Natural killer cell (primary cell): ENCODE measurements at regions of chr12 and their contacts with region 1.

Region 1: DNA sequence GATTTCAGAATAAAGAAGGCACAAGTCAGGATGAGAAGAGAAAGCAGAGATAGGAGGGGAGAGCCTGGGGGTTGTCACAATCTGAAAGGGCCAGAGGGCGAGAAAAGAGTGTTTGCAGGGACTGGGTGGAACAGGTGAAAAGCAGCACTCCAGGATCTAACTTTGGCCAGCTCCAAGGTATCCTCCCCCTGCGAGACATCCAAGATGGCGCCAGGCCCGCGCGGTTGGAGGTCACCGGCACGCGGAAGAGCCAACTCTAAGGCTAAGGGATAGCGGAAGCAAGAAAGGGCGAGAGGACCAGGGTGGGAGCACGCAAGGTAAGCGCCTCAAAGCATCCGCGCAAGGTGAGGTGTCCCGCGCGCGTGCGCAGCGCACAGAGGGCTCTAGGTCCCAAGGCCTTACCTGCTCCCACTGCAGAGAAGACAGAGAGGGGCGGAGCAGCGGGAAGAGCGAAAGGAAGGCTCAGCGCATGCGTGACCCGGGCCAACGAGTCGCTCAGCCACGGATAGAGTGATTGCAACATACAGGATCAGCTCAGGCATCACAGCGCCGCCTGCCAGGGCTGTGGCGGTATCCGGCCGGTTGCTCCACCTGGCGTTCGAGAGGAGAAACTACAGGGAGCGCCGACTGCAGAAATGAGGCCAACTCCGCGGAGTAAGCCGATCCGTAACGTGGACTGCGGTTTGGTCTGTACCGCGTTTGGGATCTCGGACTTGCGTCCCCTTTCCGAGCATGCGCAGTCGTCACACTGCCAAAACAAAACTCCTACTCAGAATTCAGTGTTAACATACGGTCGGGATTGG is at the start of gene ATP5MC2:
- DNase-seq: peak; percentile 93 to 100
- ATAC-seq: peak; percentile 90 to 98 (median 93)
- H3K4me3 ChIP-seq: peak within 1 kb of the TSS; percentile 94
- H3K4me3 Mint-ChIP-seq: peak within 1 kb of the TSS; percentile 86
- H3K27ac ChIP-seq: peak within 1 kb of the TSS; percentile 76
- H3K27ac Mint-ChIP-seq: peak within 1 kb of the TSS; percentile 85 to 86
- H3K4me1 ChIP-seq: peaks cover 24% of the 10 kb centered on the region
- H3K4me1 Mint-ChIP-seq: peaks cover 27 to 29% of the 10 kb centered on the region in 2 donors
- H3K27me3 ChIP-seq: peaks cover 12% of the 10 kb centered on the region
- H3K27me3 Mint-ChIP-seq: peaks cover 9 to 15% of the 10 kb centered on the region in 2 donors
- CTCF ChIP-seq: peak; percentile 96
- total RNA-seq, gene ATP5MC2: 180 to 195 (median 184) TPM

Region 2: GRCh38 chr12:53543539-53543938 is 132.3 kb before region 1 on chr12:
- intact Hi-C with region 1: loop called (anchors 1 kb)
- DNase-seq: peak in 1 of 2 donors; percentile 77
- ATAC-seq: peak; percentile 74 to 80 (median 77)
- H3K4me3 ChIP-seq: no peak overlapping the region
- H3K4me3 Mint-ChIP-seq: no peak overlapping the region
- H3K27ac ChIP-seq: no peak overlapping the region
- H3K27ac Mint-ChIP-seq: peak overlapping the region; percentile 23 to 53
- H3K4me1 ChIP-seq: no peaks in the 10 kb centered on the region
- H3K4me1 Mint-ChIP-seq: no peaks in the 10 kb centered on the region
- H3K27me3 ChIP-seq: no peaks in the 10 kb centered on the region
- H3K27me3 Mint-ChIP-seq: no peaks in the 10 kb centered on the region
- CTCF ChIP-seq: no peak

Region 3: GRCh38 chr12:53625946-53626701 is 49.7 kb before region 1 on chr12 and contains the start of gene ATF7:
- intact Hi-C with region 1: loop called (anchors 2 kb)
- DNase-seq: peak; percentile 98 to 99
- ATAC-seq: peak; percentile 91 to 98 (median 94)
- H3K4me3 ChIP-seq: peak within 1 kb of the TSS; percentile 68
- H3K4me3 Mint-ChIP-seq: peak within 1 kb of the TSS; percentile 100
- H3K27ac ChIP-seq: peak within 1 kb of the TSS; percentile 85
- H3K27ac Mint-ChIP-seq: peak within 1 kb of the TSS; percentile 94 to 95
- H3K4me1 ChIP-seq: peaks cover 8% of the 10 kb centered on the region
- H3K4me1 Mint-ChIP-seq: peaks cover 40 to 43% of the 10 kb centered on the region in 2 donors
- H3K27me3 ChIP-seq: no peaks in the 10 kb centered on the region
- H3K27me3 Mint-ChIP-seq: no peaks in the 10 kb centered on the region
- CTCF ChIP-seq: no peak
- total RNA-seq, gene ATF7: 32.3 to 42.3 (median 34.9) TPM

Region 4: DNA sequence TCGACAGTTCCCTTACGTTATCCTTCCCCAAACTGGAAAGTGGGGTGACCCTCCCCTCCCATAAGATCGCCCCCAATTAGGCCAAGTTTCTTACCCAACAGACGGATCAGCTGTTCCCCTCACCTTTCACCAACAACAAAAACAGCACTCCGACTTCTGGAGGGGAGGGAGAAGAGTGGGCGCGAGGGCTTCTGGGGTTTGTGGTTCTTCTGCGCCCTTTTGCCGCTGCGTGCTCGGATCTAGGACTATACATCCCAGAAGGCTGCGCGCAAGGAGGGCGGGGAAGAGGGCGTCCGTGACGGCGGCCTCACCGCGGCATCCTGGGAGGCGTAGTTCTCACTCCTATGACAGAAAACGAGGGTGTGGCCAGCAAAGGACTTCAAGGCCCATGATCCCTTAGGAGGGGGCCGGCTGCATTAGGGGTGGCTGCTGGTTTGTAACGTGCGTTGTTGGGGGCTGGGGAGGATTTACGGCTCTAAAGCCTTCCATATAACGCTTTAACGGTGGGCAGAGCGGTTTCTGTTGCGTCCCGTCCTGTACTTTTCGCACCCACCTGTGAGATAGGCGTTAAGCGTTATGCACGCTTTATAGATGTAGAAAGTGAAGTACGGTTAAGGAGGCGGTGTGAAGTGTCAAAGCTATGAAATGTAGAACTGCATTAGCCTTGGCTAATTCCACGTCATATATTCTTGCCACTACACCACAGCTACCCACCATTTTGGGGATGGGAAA is 51.6 kb after region 1 on chr12 and contains the start of gene CALCOCO1:
- intact Hi-C with region 1: loop called (anchors 1 kb)
- DNase-seq: peak; percentile 92 to 99
- ATAC-seq: peak; percentile 92 to 99 (median 94)
- H3K4me3 ChIP-seq: peak within 1 kb of the TSS; percentile 43
- H3K4me3 Mint-ChIP-seq: peak within 1 kb of the TSS; percentile 93
- H3K27ac ChIP-seq: peak within 1 kb of the TSS; percentile 76
- H3K27ac Mint-ChIP-seq: peak within 1 kb of the TSS; percentile 90 to 92
- H3K4me1 ChIP-seq: peaks cover 18% of the 10 kb centered on the region
- H3K4me1 Mint-ChIP-seq: peaks cover 30 to 36% of the 10 kb centered on the region in 2 donors
- H3K27me3 ChIP-seq: no peaks in the 10 kb centered on the region
- H3K27me3 Mint-ChIP-seq: peaks cover 4 to 10% of the 10 kb centered on the region in 2 donors
- CTCF ChIP-seq: no peak
- total RNA-seq, gene CALCOCO1: 215 to 256 (median 226) TPM